Right ventricle myocardium superior (tissue), 1 donor: ENCODE measurements at regions of chr1 and their contacts with region 1.

Region 1: GRCh38 chr1:19096036-19096833 is 113.8 kb downstream of the UBR4 start:
- DNase-seq: no peak
- ATAC-seq: peak; percentile 83

Region 2: DNA sequence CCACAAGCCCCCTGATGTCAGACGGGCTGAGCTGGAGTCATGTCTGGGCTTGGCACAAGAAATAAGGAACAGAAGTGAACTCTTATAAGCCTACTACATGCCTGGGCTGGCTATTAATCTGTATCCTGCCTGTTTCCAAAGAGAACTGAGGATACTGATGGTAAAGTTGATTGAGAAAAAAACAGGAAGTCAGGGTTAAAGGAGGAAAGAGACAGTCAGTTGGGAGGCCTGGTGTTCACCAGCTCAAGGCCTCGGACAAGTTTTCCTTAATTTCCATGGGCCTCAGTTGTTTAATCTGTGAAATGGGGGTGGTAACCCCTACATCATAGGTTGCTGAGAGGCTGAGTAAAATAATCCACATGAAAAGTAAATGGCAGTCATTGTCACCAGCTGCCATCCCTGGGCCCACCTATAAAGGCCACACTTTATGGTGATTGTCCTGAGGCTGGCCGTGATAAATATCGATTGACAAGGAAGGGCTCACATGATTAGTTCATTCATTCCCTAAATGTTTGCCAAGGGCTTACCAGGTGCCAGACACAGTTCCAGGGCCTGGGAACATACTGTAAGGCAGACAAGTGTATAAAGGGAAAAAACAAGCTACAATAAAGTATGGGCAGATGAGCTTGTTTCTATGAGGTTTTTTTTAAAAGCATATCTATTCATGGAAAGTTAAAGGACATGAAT is 196.7 kb before region 1 on chr1:
- intact Hi-C with region 1: loop called (anchors 5 kb)
- DNase-seq: no peak
- ATAC-seq: no peak

Region 3: DNA sequence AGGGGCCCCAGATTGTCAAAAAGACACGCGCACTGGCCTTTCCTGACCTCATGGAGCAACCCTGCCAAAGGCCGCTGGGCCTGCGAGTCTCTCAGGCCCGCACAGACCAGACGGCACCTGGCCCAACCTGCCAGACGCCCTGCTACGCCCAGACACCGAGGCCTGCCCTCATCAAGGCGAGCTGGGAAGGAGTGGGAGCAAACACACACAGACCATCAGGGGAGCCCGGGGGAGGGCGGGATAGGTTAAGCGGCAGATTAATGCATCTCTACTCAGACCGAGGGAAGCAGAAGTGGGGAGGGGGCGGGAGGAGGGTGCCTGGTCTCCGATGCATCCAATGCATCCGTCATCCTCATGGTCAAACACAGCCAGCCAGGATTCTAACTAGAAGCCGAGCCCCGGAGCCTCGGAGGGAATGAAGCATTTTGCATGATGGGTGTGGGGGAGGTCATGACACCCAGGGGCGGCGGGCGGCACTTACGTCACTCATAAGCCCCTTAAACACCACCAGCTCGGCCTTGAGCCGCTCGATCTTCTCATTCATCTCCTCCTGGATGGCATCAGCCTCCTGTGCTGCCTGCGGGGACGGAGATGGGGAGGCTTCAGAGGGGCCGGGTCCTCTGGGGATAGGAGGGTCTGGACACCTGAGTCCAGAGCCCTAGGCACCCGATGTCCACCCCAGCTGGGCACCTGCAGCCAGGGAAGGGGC is 176.9 kb before region 1 on chr1:
- intact Hi-C with region 1: loop called (anchors 5 kb)
- DNase-seq: no peak
- ATAC-seq: no peak